ENCODE measurements at regions of chr3 and their contacts with region 1.

Region 1: GRCh38 chr3:183895296-183895695 is 10.6 kb upstream of the PARL start:
- DNase-seq: peak; percentile 5
- H3K4me3 ChIP-seq: no peak overlapping the region
- CTCF ChIP-seq: peak; percentile 79

Region 2: DNA sequence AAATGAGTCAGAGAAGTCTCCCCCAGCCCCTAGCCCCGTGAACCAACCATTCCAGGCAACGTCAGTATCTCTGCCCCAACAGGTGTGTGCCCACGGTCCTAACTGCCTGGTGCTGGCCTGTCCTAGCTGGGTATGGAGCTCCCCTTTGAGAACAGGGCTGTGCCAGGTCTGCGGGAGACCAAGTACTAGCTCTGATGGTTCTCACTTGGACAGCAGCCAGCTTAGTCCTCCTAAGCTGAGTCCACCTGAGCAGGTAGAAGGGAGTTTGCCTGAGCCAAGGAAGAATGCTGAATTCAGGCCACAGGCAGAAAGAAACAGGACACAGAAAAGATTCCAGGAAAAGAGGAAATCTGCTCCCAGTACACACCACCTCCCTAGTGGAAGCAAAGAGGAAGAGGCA is 22.5 kb after region 1 on chr3:
- CTCF ChIA-PET with region 1: interaction called, 10 read pairs
- POLR2A ChIA-PET with region 1: no interaction called
- DNase-seq: no peak
- H3K4me3 ChIP-seq: no peak overlapping the region
- CTCF ChIP-seq: no peak

Region 3: GRCh38 chr3:184129012-184129411 is 233.7 kb after region 1 on chr3:
- CTCF ChIA-PET with region 1: interaction called, 12 read pairs
- POLR2A ChIA-PET with region 1: interaction called, 3 read pairs
- DNase-seq: no peak
- H3K4me3 ChIP-seq: no peak overlapping the region
- CTCF ChIP-seq: peak; percentile 44

Region 4: GRCh38 chr3:184241447-184242296 is 346.4 kb after region 1 on chr3:
- CTCF ChIA-PET with region 1: interaction called, 12 read pairs
- POLR2A ChIA-PET with region 1: no interaction called
- DNase-seq: no peak
- H3K4me3 ChIP-seq: no peak overlapping the region
- CTCF ChIP-seq: peak; percentile 56

Region 5: DNA sequence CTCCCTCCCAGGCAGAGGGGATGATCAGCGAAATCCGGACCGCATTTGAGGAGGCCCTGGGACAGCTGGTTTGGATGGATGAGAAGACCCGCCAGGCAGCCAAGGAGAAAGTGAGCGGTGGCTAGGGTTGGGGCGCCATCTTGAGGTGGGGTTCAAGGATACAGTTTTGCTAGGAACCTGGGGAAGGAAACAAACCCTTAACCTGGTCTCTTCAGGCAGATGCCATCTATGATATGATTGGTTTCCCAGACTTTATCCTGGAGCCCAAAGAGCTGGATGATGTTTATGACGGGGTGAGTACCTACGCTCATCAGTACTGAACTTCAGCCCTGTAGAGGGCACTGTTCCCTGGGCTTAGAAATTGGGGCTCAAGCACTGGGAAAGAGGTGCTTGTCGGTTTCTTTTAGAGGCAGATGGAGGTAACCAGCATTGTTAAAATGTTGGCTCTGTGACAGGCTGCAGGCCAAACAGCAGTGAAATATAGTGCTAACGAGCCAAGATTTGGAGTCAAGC is 394.2 kb after region 1 on chr3:
- CTCF ChIA-PET with region 1: interaction called, 17 read pairs
- POLR2A ChIA-PET with region 1: no interaction called
- DNase-seq: no peak
- H3K4me3 ChIP-seq: no peak overlapping the region
- CTCF ChIP-seq: peak; percentile 36